OCI-LY7 (cell line): ENCODE measurements at regions of chr10 and their contacts with region 1.

Region 1: DNA sequence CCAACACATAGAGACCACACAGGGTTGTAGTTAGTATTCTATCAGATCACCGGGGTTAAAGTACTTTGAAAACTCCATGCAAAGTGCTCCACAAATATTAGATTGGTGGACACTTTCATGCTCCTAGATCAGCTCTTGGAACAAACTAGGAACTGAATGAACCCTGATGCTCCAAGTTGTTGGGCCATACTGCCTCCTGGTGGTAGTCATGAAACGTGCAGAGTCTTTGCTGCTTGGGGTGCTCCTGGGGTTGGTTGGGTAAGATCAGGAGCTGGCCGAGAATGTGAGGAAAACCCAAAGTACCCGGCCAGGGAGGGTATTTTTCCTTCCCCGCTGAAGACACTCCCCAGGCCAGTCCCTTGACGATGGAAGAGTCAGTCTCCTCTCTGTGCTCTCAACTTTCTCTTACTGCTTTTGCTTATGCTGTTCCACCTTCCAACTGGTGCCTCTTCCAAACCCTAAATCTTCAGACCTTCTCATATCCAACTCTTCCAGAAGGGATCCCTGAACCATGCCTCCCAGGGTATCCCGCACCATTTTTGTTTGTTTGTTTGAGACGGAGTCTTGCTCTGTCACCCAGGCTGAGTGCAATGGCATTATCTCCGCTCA is 920 bp upstream of the RPEL1 start:
- DNase-seq: peak; percentile 77
- H3K4me3 ChIP-seq: no peak overlapping the region
- H3K27ac ChIP-seq: no peak overlapping the region
- H3K4me1 ChIP-seq: peaks cover 8% of the 10 kb centered on the region
- CTCF ChIP-seq: peak; percentile 97

Region 2: DNA sequence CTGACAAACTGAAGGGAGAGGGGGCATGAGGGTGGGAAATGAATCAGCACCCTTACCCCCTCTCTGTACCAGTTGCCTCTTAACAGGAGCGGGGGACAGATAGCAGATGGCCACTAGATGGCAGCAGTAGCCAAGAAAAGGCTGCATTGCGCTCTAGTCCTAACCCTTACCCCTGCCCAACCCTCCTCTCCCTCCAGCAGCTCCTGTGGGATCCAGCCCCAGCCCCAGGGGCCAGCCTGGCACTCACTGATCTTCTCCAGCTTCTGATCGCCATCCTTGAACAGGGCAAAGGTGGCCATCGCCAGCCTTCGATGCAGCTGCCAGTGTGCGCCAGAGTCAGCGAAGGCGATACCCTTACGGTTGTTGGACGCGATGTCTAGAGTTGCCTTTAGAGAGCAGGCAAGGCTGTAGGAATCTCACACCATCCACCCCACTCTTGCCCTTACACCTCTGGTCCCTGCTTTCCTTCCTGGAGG is 409.7 kb before region 1 on chr10:
- CTCF ChIA-PET with region 1: no interaction called
- POLR2A ChIA-PET with region 1: no interaction called
- intact Hi-C with region 1: loop called (anchors 5 kb)
- DNase-seq: peak; percentile 80
- H3K4me3 ChIP-seq: no peak overlapping the region
- H3K27ac ChIP-seq: no peak overlapping the region
- H3K4me1 ChIP-seq: no peaks in the 10 kb centered on the region
- CTCF ChIP-seq: peak; percentile 91

Region 3: GRCh38 chr10:103069453-103070331 is 175.1 kb before region 1 on chr10:
- CTCF ChIA-PET with region 1: interaction called, 6 read pairs
- POLR2A ChIA-PET with region 1: no interaction called
- intact Hi-C with region 1: loop called (anchors 1 kb)
- DNase-seq: peak; percentile 81
- H3K4me3 ChIP-seq: no peak overlapping the region
- H3K27ac ChIP-seq: peak overlapping the region; percentile 7
- H3K4me1 ChIP-seq: peaks cover 21% of the 10 kb centered on the region
- CTCF ChIP-seq: peak; percentile 95

Region 4: GRCh38 chr10:103125323-103126267 is 119.2 kb before region 1 on chr10:
- CTCF ChIA-PET with region 1: no interaction called
- POLR2A ChIA-PET with region 1: no interaction called
- intact Hi-C with region 1: no loop called
- DNase-seq: no peak
- H3K4me3 ChIP-seq: no peak overlapping the region
- H3K27ac ChIP-seq: no peak overlapping the region
- H3K4me1 ChIP-seq: no peaks in the 10 kb centered on the region
- CTCF ChIP-seq: no peak

Region 5: GRCh38 chr10:103192451-103193106 is 52.2 kb before region 1 on chr10:
- CTCF ChIA-PET with region 1: no interaction called
- POLR2A ChIA-PET with region 1: no interaction called
- intact Hi-C with region 1: loop called (anchors 5 kb)
- DNase-seq: peak; percentile 91
- H3K4me3 ChIP-seq: peak overlapping the region; percentile 91
- H3K27ac ChIP-seq: peak overlapping the region; percentile 77
- H3K4me1 ChIP-seq: peaks cover 43% of the 10 kb centered on the region
- CTCF ChIP-seq: no peak

Region 6: GRCh38 chr10:103204353-103205255 is 40.2 kb before region 1 on chr10:
- CTCF ChIA-PET with region 1: no interaction called
- POLR2A ChIA-PET with region 1: no interaction called
- intact Hi-C with region 1: no loop called
- DNase-seq: no peak
- H3K4me3 ChIP-seq: no peak overlapping the region
- H3K27ac ChIP-seq: no peak overlapping the region
- H3K4me1 ChIP-seq: no peaks in the 10 kb centered on the region
- CTCF ChIP-seq: no peak

Region 7: DNA sequence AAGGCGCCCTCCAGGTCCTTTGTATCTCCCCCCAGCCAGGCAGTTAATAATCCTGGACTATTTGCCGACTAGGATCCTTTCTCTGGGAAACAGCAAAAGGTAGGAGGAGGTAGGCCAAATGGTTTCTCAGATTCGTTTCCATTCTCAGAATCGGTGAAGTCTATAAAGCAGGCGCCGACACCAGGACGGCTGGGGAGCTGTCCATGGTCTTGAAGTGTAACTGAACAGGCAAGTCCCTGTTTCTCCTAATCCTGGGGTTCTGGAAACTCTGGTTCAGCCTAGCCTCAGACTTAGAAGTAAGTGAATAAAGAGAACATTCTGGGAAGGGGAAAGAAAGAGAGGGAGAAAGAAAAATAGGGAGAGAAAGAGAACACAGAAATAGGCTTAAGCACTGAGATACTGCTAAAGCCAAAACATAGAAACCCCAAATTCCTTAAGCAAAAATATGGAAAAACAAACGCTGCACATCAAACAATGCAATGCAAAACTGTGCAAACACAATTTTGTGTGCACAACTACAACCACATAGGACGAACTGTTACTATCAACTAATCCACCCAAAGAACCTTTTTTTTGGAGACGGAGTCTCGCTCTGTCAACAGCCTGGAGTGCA is 21.1 kb after region 1 on chr10:
- CTCF ChIA-PET with region 1: no interaction called
- POLR2A ChIA-PET with region 1: no interaction called
- intact Hi-C with region 1: no loop called
- DNase-seq: peak; percentile 39
- H3K4me3 ChIP-seq: no peak overlapping the region
- H3K27ac ChIP-seq: no peak overlapping the region
- H3K4me1 ChIP-seq: no peaks in the 10 kb centered on the region
- CTCF ChIP-seq: no peak